CD4-positive, alpha-beta T cell (primary cell): ENCODE measurements at regions of chr17 and their contacts with region 1.

Region 1: DNA sequence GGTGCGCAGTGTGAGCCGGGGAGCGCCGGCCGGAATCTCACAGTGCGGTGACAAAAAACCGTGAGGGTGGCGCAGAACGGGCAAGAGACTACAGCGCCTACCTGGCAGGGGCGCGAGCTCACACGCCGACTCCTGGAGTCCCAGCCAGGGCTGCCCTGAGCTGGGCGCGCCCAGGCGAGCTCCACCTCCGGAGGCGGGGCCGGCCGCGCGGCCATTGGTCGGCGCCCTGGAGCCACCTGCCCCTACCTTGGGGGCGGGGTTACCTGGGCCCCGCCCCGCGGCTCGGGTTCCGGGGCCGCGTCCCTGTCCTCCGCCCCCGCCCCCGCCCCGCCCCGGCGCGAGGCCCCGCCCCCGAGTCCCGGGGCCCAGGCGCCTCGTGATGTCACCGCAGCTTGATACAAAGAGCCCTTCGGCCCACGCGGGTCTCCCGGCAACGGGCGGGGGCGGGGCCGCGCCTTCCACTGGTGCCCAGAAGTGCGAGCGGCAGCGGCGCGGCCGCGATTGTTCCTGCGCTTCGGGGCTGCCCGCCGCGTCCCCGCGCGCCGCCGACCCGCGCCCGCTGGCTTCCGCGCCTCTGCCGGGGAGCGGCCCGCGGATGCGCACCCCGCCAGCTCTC is 96.3 kb downstream of the RAB11FIP4 start:
- DNase-seq: peak; percentile 89 to 99 (median 96)
- ATAC-seq: peak; percentile 91
- H3K4me3 ChIP-seq: peak overlapping the region; percentile 92
- H3K4me3 Mint-ChIP-seq: peak overlapping the region; percentile 92
- H3K27ac ChIP-seq: peak overlapping the region; percentile 63 to 77
- H3K27ac Mint-ChIP-seq: peak overlapping the region; percentile 86
- H3K4me1 ChIP-seq: peaks cover 53% of the 10 kb centered on the region
- H3K4me1 Mint-ChIP-seq: peaks cover 53% of the 10 kb centered on the region
- H3K27me3 ChIP-seq: no peaks in the 10 kb centered on the region
- H3K27me3 Mint-ChIP-seq: no peaks in the 10 kb centered on the region
- CTCF ChIP-seq: peak; percentile 10

Region 2: DNA sequence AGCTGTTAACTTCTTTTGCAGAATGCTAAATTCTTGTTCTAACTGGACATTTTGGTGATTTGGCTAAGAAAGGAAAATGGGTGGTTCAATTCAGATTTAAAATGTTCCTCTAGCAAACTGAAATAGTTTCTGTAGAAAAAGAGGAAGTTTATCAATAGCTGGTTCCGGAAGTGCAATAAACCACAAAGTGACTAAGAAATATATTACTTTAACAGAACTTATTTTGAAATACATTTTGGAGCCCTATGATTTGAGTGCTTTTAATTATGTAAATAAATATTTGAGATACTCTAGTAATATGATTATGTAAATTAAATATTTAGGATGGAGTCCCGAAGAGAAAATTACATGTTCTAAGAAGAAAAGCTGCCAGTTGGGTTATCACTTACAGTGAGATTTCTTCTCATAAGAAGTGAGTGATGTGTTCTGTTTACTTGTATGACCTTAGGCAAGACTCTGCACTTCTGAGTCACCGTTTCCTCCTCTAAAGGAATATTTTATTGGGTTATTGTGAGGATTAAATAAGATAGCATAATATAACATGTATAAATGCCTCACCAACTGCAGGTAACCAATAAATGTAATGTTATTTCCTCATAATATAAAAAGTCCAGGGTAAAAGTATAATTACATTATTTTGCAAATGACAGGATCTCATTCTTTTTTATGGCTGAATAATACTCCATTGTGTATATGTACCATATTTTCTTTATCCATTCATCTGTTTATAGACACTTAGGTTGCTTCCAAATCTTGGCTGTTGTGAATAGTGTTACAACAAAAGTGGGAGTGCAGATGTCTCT is 173.6 kb before region 1 on chr17 and contains the start of gene EVI2B:
- CTCF ChIA-PET with region 1: no interaction called
- POLR2A ChIA-PET with region 1: interaction called, 9 read pairs
- intact Hi-C with region 1: loop called in 1 of 2 experiments (anchors 5 kb)
- DNase-seq: peak in 4 of 14 experiments; percentile 40 to 83 (median 74)
- ATAC-seq: peak; percentile 39
- H3K4me3 ChIP-seq: peak within 1 kb of the TSS; percentile 67
- H3K4me3 Mint-ChIP-seq: peak within 1 kb of the TSS; percentile 92
- H3K27ac ChIP-seq: peak within 1 kb of the TSS; percentile 47 to 77
- H3K27ac Mint-ChIP-seq: peak within 1 kb of the TSS; percentile 97
- H3K4me1 ChIP-seq: peaks cover 5% of the 10 kb centered on the region
- H3K4me1 Mint-ChIP-seq: peaks cover 60% of the 10 kb centered on the region
- H3K27me3 ChIP-seq: no peaks in the 10 kb centered on the region
- H3K27me3 Mint-ChIP-seq: no peaks in the 10 kb centered on the region
- CTCF ChIP-seq: no peak
- total RNA-seq, gene EVI2B: 99.1 to 102 TPM

Region 3: DNA sequence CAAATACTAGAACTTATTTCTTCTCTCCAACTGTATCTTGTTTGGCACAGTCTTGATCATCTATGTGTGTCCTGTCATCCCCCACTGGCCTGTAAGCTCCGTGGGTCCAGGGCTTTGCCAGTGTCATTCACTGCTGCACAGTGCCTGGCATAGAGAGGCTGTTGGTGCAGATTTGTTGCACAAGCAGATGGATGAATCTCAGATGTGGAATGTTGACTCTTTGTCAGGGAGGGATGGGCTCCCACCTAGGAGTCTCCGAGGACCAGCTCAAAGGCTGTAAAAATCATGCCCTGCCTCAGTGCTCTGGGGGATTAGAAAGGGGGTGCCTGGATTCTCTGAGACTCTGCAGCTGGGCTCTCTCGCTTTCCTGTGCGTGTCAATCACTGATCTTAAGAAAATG is 35.7 kb before region 1 on chr17:
- CTCF ChIA-PET with region 1: no interaction called
- POLR2A ChIA-PET with region 1: no interaction called
- intact Hi-C with region 1: no loop called
- DNase-seq: no peak
- ATAC-seq: no peak
- H3K4me3 ChIP-seq: no peak overlapping the region
- H3K4me3 Mint-ChIP-seq: no peak overlapping the region
- H3K27ac ChIP-seq: no peak overlapping the region
- H3K27ac Mint-ChIP-seq: no peak overlapping the region
- H3K4me1 ChIP-seq: no peaks in the 10 kb centered on the region
- H3K4me1 Mint-ChIP-seq: no peaks in the 10 kb centered on the region
- H3K27me3 ChIP-seq: no peaks in the 10 kb centered on the region
- H3K27me3 Mint-ChIP-seq: no peaks in the 10 kb centered on the region
- CTCF ChIP-seq: no peak

Region 4: DNA sequence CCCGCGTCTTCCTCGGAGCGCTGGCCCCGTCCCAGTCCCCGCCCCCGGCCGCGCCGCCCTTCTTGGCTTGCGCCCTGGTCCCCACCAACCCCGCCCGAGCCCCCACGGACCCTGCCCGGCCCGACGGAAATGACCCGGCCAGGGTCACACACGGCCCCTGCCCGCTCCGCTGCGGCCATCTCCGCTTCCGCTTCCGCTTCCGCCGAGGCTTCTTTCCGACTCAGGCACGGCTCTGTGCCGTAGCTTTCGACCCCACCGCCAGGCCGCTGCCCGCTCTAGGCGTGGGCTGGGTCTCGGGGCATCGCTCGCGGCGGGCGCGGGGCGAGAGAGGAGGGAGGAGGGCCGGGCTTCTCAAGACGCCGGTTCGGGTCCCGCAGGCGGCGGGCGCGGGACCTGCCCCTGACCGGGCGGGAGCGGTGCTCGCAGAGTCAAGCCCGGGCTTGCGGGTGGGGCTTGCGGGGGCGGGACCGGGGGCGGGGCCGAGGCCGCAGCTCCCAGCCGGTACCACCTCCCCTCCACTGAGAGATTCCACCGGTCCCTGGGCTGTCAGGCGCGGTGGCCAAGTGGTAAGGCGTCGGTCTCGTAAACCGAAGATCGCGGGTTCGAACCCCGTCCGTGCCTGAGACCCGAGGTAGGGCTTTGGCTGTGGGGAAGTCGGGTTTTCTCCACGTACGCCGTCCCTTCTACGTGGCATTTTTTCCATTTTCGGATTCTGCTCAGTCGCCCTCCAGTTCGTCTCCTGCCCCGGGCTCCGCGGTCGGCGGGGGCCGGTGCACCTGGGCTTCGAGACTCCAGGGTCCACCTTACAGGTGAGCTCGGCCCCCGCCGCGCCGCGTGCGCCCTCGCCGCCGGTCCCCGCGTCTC is 62.0 kb after region 1 on chr17:
- CTCF ChIA-PET with region 1: no interaction called
- POLR2A ChIA-PET with region 1: interaction called, 12 read pairs
- intact Hi-C with region 1: loop called in 1 of 2 experiments (anchors 2 kb)
- DNase-seq: peak; percentile 78 to 93 (median 87)
- ATAC-seq: peak; percentile 87
- H3K4me3 ChIP-seq: peak overlapping the region; percentile 74
- H3K4me3 Mint-ChIP-seq: peak overlapping the region; percentile 96
- H3K27ac ChIP-seq: peak overlapping the region in 1 of 2 donors; percentile 56
- H3K27ac Mint-ChIP-seq: peak overlapping the region; percentile 76
- H3K4me1 ChIP-seq: peaks cover 15% of the 10 kb centered on the region
- H3K4me1 Mint-ChIP-seq: peaks cover 23% of the 10 kb centered on the region
- H3K27me3 ChIP-seq: no peaks in the 10 kb centered on the region
- H3K27me3 Mint-ChIP-seq: no peaks in the 10 kb centered on the region
- CTCF ChIP-seq: no peak